Cardiac septum (tissue), 1 donor: ENCODE measurements at regions of chr6 and their contacts with region 1.

Region 1: DNA sequence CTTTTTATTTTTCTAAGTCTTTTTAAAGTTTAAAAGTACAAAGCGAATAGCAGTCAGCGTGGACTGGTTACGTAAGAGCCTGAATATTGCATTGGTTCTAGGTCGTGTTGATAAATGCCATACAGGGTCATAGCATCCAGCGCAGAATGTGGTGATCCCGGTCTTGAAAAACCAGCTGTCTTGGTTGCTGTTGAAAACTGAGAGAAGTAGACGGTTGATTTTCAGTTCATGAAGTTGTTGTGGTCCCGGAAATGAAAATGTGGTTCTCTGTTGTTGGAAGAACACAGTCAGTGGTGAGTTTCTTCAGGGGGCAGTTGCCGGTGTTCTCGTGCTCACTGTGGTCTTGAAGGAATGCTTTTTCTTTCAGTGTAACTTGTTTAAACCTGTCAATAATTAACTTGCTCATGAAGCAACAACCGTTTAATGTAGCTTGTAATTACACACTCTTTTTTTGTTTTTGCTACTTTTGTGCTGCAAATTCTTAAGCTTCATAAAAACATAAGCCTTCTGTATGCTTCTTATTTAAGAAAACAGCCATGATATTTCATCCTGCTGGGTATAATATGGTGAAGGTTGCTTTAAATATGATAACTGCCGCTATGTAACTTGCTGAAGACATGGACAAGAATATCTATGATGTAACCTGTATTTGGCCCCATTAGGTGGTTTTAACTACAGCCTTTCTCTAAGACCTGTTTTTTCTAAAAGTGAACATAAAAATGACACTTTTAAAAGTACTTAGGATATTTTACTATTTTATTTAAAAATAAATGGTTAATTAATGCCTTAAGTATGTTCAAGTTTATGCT is 64.8 kb upstream of the KIF25 start:
- DNase-seq: no peak

Region 2: DNA sequence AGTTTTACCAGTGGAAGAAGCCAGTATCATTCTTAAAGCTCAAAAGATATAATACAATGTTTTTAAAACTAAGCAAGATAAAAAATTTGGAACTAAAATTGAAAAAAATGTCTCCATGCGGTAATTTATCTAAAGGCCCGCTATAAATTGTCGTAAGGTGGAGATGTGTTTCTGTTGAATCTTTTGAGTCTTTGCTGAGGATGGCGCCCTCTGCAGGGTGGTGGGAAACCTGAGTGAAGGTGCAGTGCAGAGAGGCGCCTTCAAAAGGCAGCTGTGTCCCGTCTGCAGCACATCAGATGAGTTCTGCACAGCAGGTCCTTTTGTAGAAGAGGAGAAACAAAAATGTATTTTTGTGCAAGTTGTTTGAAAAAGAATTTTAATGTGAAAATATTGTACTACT is 35.4 kb after region 1 on chr6:
- intact Hi-C with region 1: loop called (anchors 5 kb)
- DNase-seq: no peak